CD4-positive, alpha-beta memory T cell (primary cell): ENCODE measurements at regions of chr11 and their contacts with region 1.

Region 1: GRCh38 chr11:61392981-61393595 is 701 bp downstream of the TMEM216 start:
- DNase-seq: peak; percentile 24 to 46 (median 27)
- H3K4me3 ChIP-seq: peak overlapping the region; percentile 77 to 86
- H3K4me3 Mint-ChIP-seq: peak overlapping the region; percentile 91 to 97 (median 96)
- H3K27ac ChIP-seq: peak overlapping the region; percentile 74
- H3K27ac Mint-ChIP-seq: peak overlapping the region; percentile 95 to 99 (median 98)
- H3K4me1 ChIP-seq: peaks cover 26% of the 10 kb centered on the region
- H3K4me1 Mint-ChIP-seq: peaks cover 12 to 27% (median 22%) of the 10 kb centered on the region in 4 donors
- H3K27me3 ChIP-seq: no peaks in the 10 kb centered on the region
- H3K27me3 Mint-ChIP-seq: no peaks in the 10 kb centered on the region

Region 2: GRCh38 chr11:61266602-61267001 is 126.5 kb before region 1 on chr11:
- CTCF ChIA-PET with region 1: no interaction called
- POLR2A ChIA-PET with region 1: no interaction called
- intact Hi-C with region 1: no loop called
- DNase-seq: no peak
- H3K4me3 ChIP-seq: no peak overlapping the region
- H3K4me3 Mint-ChIP-seq: no peak overlapping the region
- H3K27ac ChIP-seq: no peak overlapping the region
- H3K27ac Mint-ChIP-seq: no peak overlapping the region
- H3K4me1 ChIP-seq: no peaks in the 10 kb centered on the region
- H3K4me1 Mint-ChIP-seq: no peaks in the 10 kb centered on the region
- H3K27me3 ChIP-seq: no peaks in the 10 kb centered on the region
- H3K27me3 Mint-ChIP-seq: peaks cover 0 to 3% of the 10 kb centered on the region in 2 donors

Region 3: DNA sequence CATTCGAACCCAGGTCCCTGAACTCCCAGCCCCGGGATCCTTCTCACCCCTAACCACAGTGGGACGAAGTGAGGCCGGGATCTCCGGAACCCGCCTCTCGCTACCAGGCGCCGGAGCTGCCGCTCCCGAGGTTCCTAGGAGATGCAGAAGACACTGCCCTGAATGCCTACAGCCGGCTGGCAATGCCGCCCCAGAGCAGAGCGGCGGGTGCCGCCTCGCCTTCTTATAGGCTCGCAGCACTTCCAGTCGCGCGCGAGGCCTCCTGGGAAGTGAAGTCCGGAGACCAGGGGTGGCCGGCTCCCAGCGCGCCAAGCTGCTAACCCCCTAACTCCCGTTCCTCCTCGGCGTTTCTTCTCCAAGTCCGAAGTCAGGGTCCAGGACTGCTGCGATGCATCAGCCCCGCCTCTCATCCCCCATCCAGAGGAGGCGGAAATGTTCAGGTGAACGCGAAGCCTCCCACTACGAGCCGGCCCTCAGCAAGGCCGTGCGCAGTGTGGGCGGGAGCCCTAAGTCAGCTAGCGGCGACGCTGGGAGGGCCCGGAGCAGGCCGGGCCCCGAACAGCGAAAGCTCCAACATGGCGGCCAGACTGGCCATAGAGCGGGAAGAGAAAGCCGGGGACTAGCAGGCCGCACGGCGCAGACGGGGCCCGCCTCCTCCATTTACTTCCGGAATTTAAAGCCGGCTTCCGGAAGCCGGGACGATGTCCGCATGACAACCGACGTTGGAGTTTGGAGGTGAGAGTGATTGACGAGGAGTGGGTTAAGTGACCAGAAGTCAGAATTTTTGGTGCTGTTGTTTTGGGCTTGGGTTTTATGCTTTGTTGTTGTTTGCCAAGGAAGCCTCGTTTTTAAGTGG is 31.2 kb before region 1 on chr11 and contains the starts of genes CYB561A3 and TMEM138:
- CTCF ChIA-PET with region 1: interaction called, 11 read pairs
- POLR2A ChIA-PET with region 1: interaction called, 59 read pairs
- intact Hi-C with region 1: loop called (anchors 2 kb)
- DNase-seq: peak; percentile 83 to 90 (median 85)
- H3K4me3 ChIP-seq: peak within 1 kb of the TSS; percentile 87 to 95
- H3K4me3 Mint-ChIP-seq: peak within 1 kb of the TSS; percentile 93 to 100 (median 98)
- H3K27ac ChIP-seq: peak within 1 kb of the TSS; percentile 95
- H3K27ac Mint-ChIP-seq: peak within 1 kb of the TSS; percentile 92 to 100 (median 99)
- H3K4me1 ChIP-seq: peaks cover 27% of the 10 kb centered on the region
- H3K4me1 Mint-ChIP-seq: peaks cover 21 to 51% (median 33%) of the 10 kb centered on the region in 4 donors
- H3K27me3 ChIP-seq: no peaks in the 10 kb centered on the region
- H3K27me3 Mint-ChIP-seq: no peaks in the 10 kb centered on the region
- total RNA-seq, gene CYB561A3: 40.1 to 42.6 TPM
- total RNA-seq, gene TMEM138: 61.2 to 62.5 TPM

Region 4: DNA sequence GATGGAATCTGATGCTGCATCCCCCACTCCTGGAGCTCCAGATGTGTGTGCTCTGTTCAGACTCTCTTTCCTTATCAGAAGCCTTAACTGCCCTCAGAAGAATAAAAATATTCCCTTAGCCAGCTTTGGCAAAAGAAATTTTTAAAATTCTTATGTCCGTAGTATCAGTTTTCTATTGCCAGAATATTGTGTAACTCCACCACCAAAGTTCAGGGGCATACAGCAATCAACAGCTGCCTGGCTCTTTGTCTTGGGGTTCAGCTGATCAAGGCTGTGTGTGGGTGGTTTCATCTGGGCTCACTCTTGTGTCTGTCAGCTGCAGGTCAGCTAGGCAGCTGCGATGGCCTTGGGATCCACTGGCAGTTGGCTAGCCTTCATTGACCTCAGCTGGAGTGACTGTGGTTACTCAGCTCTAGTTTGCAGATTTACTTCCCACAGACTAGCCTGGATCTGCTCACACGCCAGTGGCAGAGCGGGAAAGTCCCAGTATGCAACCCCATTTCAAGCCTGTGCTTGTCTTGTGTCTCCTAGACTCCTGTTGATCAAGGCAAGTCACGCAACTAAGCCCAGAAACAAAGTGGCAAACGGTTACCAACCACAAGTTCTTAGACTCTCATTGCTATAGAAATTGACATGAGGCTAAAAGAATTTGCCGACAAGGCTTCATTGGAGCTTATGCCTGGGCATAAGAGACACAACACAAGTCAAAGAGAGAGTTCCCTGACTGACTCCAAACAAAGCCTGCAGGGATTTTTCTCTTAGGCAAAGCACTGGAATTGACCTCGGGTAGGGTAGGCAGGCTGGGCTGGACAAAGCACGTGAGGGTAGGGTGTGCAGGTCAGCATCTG is 23.5 kb before region 1 on chr11:
- CTCF ChIA-PET with region 1: no interaction called
- POLR2A ChIA-PET with region 1: interaction called, 13 read pairs
- intact Hi-C with region 1: no loop called
- DNase-seq: no peak
- H3K4me3 ChIP-seq: no peak overlapping the region
- H3K4me3 Mint-ChIP-seq: no peak overlapping the region
- H3K27ac ChIP-seq: no peak overlapping the region
- H3K27ac Mint-ChIP-seq: peak overlapping the region in 2 of 7 donors; percentile 0 to 7
- H3K4me1 ChIP-seq: no peaks in the 10 kb centered on the region
- H3K4me1 Mint-ChIP-seq: no peaks in the 10 kb centered on the region
- H3K27me3 ChIP-seq: no peaks in the 10 kb centered on the region
- H3K27me3 Mint-ChIP-seq: no peaks in the 10 kb centered on the region

Region 5: DNA sequence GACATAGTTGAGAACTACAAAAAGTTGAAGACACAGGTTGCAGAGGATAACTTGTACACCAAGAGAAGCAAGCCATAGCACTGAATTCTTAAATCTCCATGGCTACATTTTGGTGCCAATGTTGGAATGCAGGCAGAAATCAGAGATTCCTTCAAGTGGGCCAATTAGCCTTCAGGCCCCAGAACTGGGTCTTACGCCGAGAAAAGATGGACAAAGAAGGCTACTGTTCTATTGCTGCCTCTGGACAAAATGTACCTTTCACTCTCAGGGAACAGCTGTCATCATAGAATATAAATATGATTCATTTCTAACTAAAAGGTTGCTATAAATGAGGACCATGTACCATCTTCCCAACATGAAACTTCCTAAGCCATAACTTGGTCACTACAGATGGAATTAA is 13.0 kb after region 1 on chr11:
- CTCF ChIA-PET with region 1: interaction called, 39 read pairs
- POLR2A ChIA-PET with region 1: interaction called, 21 read pairs
- intact Hi-C with region 1: no loop called
- DNase-seq: no peak
- H3K4me3 ChIP-seq: no peak overlapping the region
- H3K4me3 Mint-ChIP-seq: no peak overlapping the region
- H3K27ac ChIP-seq: no peak overlapping the region
- H3K27ac Mint-ChIP-seq: no peak overlapping the region
- H3K4me1 ChIP-seq: no peaks in the 10 kb centered on the region
- H3K4me1 Mint-ChIP-seq: peaks cover 0 to 4% (median 1%) of the 10 kb centered on the region in 4 donors
- H3K27me3 ChIP-seq: no peaks in the 10 kb centered on the region
- H3K27me3 Mint-ChIP-seq: no peaks in the 10 kb centered on the region

Region 6: GRCh38 chr11:61567286-61568061 is 174.4 kb after region 1 on chr11:
- CTCF ChIA-PET with region 1: no interaction called
- POLR2A ChIA-PET with region 1: no interaction called
- intact Hi-C with region 1: no loop called
- DNase-seq: peak; percentile 61 to 82 (median 70)
- H3K4me3 ChIP-seq: no peak overlapping the region
- H3K4me3 Mint-ChIP-seq: no peak overlapping the region
- H3K27ac ChIP-seq: no peak overlapping the region
- H3K27ac Mint-ChIP-seq: peak overlapping the region in 3 of 7 donors; percentile 59 to 79 (median 72)
- H3K4me1 ChIP-seq: no peaks in the 10 kb centered on the region
- H3K4me1 Mint-ChIP-seq: peaks cover 0 to 10% (median 2%) of the 10 kb centered on the region in 4 donors
- H3K27me3 ChIP-seq: peaks cover 10% of the 10 kb centered on the region
- H3K27me3 Mint-ChIP-seq: peaks cover 34 to 55% of the 10 kb centered on the region in 2 donors

Region 7: DNA sequence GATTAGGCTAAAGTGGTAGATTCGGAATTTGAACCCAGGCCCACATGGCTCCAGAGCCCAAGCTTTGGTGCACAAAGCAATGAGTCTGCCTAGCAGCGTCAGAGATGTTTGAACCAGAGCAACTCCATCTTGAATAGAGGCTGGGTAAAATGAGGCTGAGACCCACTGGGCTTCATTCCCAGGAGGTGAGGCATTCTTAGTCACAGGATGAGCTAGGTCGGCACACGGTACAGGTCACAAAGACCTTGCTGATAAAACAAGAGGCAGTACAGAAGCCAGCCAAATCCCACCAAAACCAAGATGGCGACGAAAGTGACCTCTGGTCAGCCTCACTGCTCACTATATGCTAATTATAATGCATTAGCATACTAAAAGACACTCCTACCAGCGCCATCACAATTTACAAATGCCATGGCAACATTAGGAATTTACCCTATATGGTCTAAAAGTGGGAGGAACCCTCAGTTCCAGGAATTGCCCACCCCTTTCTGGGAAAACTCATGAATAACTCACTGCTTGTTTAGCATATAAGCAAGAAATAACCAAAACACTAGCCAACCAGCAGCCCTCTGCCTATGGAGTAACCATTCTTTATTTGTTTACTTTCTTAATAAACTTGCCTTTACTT is 246.8 kb after region 1 on chr11:
- CTCF ChIA-PET with region 1: no interaction called
- POLR2A ChIA-PET with region 1: no interaction called
- intact Hi-C with region 1: no loop called
- DNase-seq: no peak
- H3K4me3 ChIP-seq: no peak overlapping the region
- H3K4me3 Mint-ChIP-seq: no peak overlapping the region
- H3K27ac ChIP-seq: no peak overlapping the region
- H3K27ac Mint-ChIP-seq: no peak overlapping the region
- H3K4me1 ChIP-seq: no peaks in the 10 kb centered on the region
- H3K4me1 Mint-ChIP-seq: no peaks in the 10 kb centered on the region
- H3K27me3 ChIP-seq: no peaks in the 10 kb centered on the region
- H3K27me3 Mint-ChIP-seq: peaks cover 1 to 13% of the 10 kb centered on the region in 2 donors